Calu3 (cell line): ENCODE measurements at regions of chr17 and their contacts with region 1.

Region 1: GRCh38 chr17:65988081-65988850 is 203.7 kb downstream of the CEP112 start:
- DNase-seq: peak; percentile 36
- H3K4me3 Mint-ChIP-seq: no peak overlapping the region
- H3K27ac Mint-ChIP-seq: no peak overlapping the region
- H3K4me1 Mint-ChIP-seq: no peaks in the 10 kb centered on the region
- H3K27me3 Mint-ChIP-seq: peaks cover 13% of the 10 kb centered on the region
- CTCF ChIP-seq: peak; percentile 68

Region 2: GRCh38 chr17:65231662-65232335 is 756.5 kb before region 1 on chr17:
- CTCF ChIA-PET with region 1: interaction called, 3 read pairs
- intact Hi-C with region 1: loop called (anchors 2 kb)
- DNase-seq: peak; percentile 50
- H3K4me3 Mint-ChIP-seq: no peak overlapping the region
- H3K27ac Mint-ChIP-seq: no peak overlapping the region
- H3K4me1 Mint-ChIP-seq: peaks cover 10% of the 10 kb centered on the region
- H3K27me3 Mint-ChIP-seq: peaks cover 48% of the 10 kb centered on the region
- CTCF ChIP-seq: peak; percentile 26

Region 3: DNA sequence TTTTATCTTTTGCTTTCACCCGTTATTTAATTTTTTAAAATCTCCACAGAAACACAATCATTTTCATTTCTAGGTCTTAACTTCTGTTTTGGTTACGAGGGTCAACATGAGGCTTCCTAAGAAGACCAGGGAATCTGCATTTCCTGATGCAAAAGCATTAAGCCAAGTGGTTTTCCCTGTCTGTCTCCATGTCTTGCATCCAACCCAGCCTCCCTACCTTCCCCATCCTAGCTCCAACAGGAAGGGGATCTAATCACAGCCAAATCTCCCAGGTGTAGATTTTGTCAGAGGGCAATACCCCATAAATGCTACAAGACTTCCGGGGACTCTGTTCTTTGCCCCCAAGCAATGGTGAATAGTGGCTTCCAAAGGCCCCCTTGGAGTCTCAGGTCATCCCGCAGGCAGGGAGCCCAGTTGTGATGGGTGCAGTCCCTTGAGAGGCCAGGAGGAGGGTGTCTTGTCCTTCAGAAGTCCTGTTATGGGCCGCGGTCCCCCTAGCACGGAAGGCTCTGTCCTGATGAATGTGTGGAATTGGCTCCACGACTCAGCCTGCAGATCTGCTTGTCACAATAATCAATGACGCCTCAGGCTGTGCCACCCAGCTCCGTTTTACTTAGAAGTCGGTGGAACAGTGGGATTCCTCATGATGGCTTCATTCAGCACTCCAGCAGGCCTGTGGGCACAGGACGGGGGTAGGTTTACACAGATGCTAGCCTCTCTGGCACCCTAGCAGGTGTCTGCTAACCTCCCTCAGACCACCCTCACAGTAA is 710.0 kb before region 1 on chr17:
- CTCF ChIA-PET with region 1: no interaction called
- intact Hi-C with region 1: loop called (anchors 1 kb)
- DNase-seq: peak; percentile 42
- H3K4me3 Mint-ChIP-seq: no peak overlapping the region
- H3K27ac Mint-ChIP-seq: no peak overlapping the region
- H3K4me1 Mint-ChIP-seq: no peaks in the 10 kb centered on the region
- H3K27me3 Mint-ChIP-seq: peaks cover 27% of the 10 kb centered on the region
- CTCF ChIP-seq: peak; percentile 25

Region 4: GRCh38 chr17:65294179-65294720 is 694.0 kb before region 1 on chr17:
- CTCF ChIA-PET with region 1: no interaction called
- intact Hi-C with region 1: loop called (anchors 2 kb)
- DNase-seq: peak; percentile 50
- H3K4me3 Mint-ChIP-seq: no peak overlapping the region
- H3K27ac Mint-ChIP-seq: no peak overlapping the region
- H3K4me1 Mint-ChIP-seq: no peaks in the 10 kb centered on the region
- H3K27me3 Mint-ChIP-seq: peaks cover 38% of the 10 kb centered on the region
- CTCF ChIP-seq: peak; percentile 53

Region 5: DNA sequence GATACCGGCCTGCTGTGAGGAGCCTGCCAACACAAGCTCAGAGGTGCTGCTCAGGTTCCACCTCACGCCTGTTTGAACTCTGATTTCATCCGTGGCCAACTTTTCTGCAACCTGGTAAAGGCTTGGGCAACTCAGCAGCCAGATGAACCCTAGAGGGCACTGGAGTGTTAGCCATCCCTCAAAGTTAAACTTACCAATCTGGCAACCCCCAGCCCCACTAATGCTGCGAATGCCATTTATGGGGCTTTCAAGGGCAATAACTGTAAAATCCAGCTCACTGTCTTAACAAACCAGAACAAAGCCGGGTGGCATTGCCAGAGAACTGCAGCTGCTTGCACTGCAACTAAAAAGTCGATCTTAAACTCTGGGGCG is 532.3 kb before region 1 on chr17:
- CTCF ChIA-PET with region 1: no interaction called
- intact Hi-C with region 1: loop called (anchors 10 kb)
- DNase-seq: no peak
- H3K4me3 Mint-ChIP-seq: no peak overlapping the region
- H3K27ac Mint-ChIP-seq: no peak overlapping the region
- H3K4me1 Mint-ChIP-seq: no peaks in the 10 kb centered on the region
- H3K27me3 Mint-ChIP-seq: peaks cover 47% of the 10 kb centered on the region
- CTCF ChIP-seq: no peak

Region 6: DNA sequence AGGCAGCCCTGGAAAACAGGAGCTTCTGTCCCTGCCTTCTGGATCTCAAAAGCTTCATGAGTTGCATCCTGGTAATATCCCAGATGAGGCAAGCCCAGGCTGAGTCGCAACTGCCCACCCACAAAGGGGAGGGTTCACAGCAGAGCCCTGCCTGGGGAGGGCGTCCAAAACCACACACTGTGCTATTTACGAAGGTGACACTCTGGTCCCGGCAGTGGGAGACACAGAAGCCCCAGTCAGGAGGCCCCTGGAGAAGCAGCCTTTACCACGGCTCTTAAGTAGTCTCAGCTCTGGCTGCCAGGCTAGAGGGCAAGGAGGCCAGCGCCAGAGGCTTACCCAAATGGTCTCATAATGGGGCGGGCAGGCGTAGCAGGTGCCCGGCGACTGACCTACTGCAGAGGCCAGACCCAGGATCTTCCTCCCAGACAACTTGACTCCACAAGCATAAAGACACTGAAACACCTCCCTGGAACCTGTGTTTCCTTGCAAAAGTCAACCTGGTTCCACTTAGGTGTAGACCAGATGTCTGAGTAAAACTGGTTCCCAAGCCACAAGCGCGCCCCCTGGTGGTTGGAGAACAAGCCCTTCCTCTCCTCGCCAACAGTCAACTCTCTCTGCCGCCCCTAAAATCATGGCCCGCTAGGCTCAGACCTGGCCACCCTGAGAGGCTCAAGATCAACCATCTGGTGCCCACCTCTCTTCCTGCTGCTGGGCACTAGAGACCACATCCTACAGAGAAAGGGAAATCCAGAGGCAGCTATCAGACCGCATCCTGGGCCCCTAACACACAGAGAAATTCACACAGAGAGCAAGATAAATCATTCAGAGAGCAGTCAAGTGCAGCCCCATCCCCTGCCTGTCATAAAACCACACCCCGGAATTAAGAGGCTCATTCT is 432.0 kb before region 1 on chr17:
- CTCF ChIA-PET with region 1: no interaction called
- intact Hi-C with region 1: loop called (anchors 10 kb)
- DNase-seq: peak; percentile 85
- H3K4me3 Mint-ChIP-seq: no peak overlapping the region
- H3K27ac Mint-ChIP-seq: no peak overlapping the region
- H3K4me1 Mint-ChIP-seq: no peaks in the 10 kb centered on the region
- H3K27me3 Mint-ChIP-seq: peaks cover 27% of the 10 kb centered on the region
- CTCF ChIP-seq: peak; percentile 72

Region 7: GRCh38 chr17:66040402-66040801 is 52.1 kb after region 1 on chr17:
- CTCF ChIA-PET with region 1: no interaction called
- intact Hi-C with region 1: no loop called
- DNase-seq: peak; percentile 8
- H3K4me3 Mint-ChIP-seq: no peak overlapping the region
- H3K27ac Mint-ChIP-seq: no peak overlapping the region
- H3K4me1 Mint-ChIP-seq: no peaks in the 10 kb centered on the region
- H3K27me3 Mint-ChIP-seq: no peaks in the 10 kb centered on the region
- CTCF ChIP-seq: no peak

Region 8: GRCh38 chr17:66165513-66166123 is 177.4 kb after region 1 on chr17:
- CTCF ChIA-PET with region 1: no interaction called
- intact Hi-C with region 1: loop called (anchors 2 kb)
- DNase-seq: peak; percentile 38
- H3K4me3 Mint-ChIP-seq: no peak overlapping the region
- H3K27ac Mint-ChIP-seq: no peak overlapping the region
- H3K4me1 Mint-ChIP-seq: no peaks in the 10 kb centered on the region
- H3K27me3 Mint-ChIP-seq: no peaks in the 10 kb centered on the region
- CTCF ChIP-seq: peak; percentile 14